Activated CD8-positive, alpha-beta memory T cell treated with anti-CD3 and anti-CD28 coated beads, Interleukin-2, amount 10 ng/mL, durations not matched to agents 7 days and 5 days (primary cell): ENCODE measurements at regions of chr15 and their contacts with region 1.

Region 1: GRCh38 chr15:85702321-85703101 is 92.2 kb downstream of the KLHL25 start:
- DNase-seq: peak; percentile 57
- ATAC-seq: peak; percentile 54
- H3K4me3 Mint-ChIP-seq: peak overlapping the region; percentile 72
- H3K27ac Mint-ChIP-seq: peak overlapping the region; percentile 91
- H3K4me1 Mint-ChIP-seq: peaks cover 61% of the 10 kb centered on the region
- H3K27me3 Mint-ChIP-seq: no peaks in the 10 kb centered on the region

Region 2: DNA sequence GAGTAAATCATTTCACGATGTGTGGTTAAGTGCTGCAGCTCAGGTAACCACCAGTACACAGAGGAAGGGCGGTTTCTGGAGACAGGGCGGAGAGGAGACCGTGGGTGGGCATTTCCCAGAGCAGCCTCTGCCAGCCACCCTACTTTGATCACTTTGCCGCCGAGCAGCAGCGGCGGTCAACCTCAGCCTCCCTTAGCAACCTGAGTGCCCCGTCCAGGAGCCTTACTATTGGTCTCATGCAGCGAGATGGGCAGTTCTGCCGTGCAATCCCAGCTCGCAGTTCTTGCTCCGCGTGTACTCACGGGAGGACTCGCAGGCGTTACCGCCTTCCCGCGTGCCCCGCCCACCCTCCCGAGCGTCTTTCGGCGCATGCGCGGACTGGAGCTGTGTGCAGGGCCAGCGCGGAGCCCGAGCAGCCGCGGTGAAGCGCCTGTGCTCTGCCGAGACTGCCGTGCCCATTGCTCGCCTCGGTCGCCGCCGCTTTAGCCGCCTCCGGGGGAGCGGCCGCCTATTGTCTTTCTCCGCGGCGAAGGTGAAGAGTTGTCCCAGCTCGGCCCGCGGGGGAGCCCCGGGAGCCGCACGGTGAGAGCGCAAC is 322.2 kb before region 1 on chr15 and contains the start of gene AKAP13:
- CTCF ChIA-PET with region 1: no interaction called
- DNase-seq: peak; percentile 99
- ATAC-seq: peak; percentile 86
- H3K4me3 Mint-ChIP-seq: peak within 1 kb of the TSS; percentile 78
- H3K27ac Mint-ChIP-seq: peak within 1 kb of the TSS; percentile 94
- H3K4me1 Mint-ChIP-seq: peaks cover 64% of the 10 kb centered on the region
- H3K27me3 Mint-ChIP-seq: peaks cover 2% of the 10 kb centered on the region
- total RNA-seq, gene AKAP13: 150 to 172 TPM

Region 3: GRCh38 chr15:85689729-85690128 is 12.8 kb before region 1 on chr15:
- CTCF ChIA-PET with region 1: interaction called, 35 read pairs
- DNase-seq: peak; percentile 86
- ATAC-seq: peak; percentile 69
- H3K4me3 Mint-ChIP-seq: peak overlapping the region; percentile 94
- H3K27ac Mint-ChIP-seq: peak overlapping the region; percentile 98
- H3K4me1 Mint-ChIP-seq: peaks cover 76% of the 10 kb centered on the region
- H3K27me3 Mint-ChIP-seq: no peaks in the 10 kb centered on the region

Region 4: GRCh38 chr15:85956532-85957275 is 254.2 kb after region 1 on chr15:
- CTCF ChIA-PET with region 1: no interaction called
- DNase-seq: no peak
- ATAC-seq: no peak
- H3K4me3 Mint-ChIP-seq: no peak overlapping the region
- H3K27ac Mint-ChIP-seq: no peak overlapping the region
- H3K4me1 Mint-ChIP-seq: peaks cover 6% of the 10 kb centered on the region
- H3K27me3 Mint-ChIP-seq: peaks cover 13% of the 10 kb centered on the region